Common myeloid progenitor, CD34-positive (primary cell): ENCODE measurements at regions of chr3 and their contacts with region 1.

Region 1: GRCh38 chr3:135503760-135504686 is 461.5 kb upstream of the PPP2R3A start:
- DNase-seq: peak; percentile 60 to 82 (median 77)
- H3K4me3 ChIP-seq: no peak overlapping the region
- H3K27ac ChIP-seq: no peak overlapping the region
- H3K4me1 ChIP-seq: peaks cover 0 to 10% (median 4%) of the 10 kb centered on the region in 4 experiments
- H3K27me3 ChIP-seq: no peaks in the 10 kb centered on the region

Region 2: DNA sequence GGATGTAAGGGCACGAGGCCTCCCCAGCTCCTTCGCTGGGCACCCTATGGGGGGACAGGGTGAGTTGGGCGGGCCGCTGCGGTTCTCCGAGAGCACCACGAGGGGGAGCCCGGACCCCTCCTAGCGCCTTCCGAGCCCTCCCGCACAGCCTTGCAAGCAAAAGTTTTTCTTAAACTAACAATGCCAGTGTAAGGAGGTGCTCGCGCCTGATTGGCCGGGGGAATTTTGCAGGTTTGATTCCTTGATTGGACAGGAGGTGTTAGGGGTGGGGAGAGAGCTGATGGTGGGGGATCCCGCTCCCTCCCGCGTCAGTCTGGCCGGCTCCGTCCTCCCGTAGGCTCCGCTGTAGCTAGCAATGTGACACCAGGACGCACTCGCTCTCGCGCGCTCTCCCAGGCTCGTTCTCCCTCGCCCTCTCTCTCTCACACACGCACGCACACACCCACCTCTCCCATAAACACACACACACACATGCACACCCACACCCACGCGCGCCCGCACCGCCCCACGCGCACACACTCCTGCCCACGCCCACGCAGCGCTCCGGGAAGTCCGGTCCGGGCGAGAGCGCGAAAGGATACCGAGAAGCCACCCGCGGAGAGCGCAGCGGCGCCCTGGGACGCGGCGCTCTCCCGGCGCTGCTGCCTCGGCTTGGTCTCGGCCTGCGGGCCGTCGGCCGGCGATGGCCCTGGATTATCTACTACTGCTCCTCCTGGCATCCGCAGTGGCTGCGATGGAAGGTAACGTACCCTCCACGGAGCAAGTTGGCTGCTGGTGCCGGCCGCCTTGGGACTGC is 708.9 kb before region 1 on chr3 and contains the start of gene EPHB1:
- CTCF ChIA-PET with region 1: interaction called, 75 read pairs
- POLR2A ChIA-PET with region 1: interaction called, 3 read pairs
- DNase-seq: peak; percentile 86 to 93 (median 93)
- H3K4me3 ChIP-seq: peak within 1 kb of the TSS; percentile 25 to 81 (median 66)
- H3K27ac ChIP-seq: no peak within 1 kb of the TSS
- H3K4me1 ChIP-seq: peaks cover 0 to 28% (median 21%) of the 10 kb centered on the region in 4 experiments
- H3K27me3 ChIP-seq: peaks cover 2 to 49% (median 18%) of the 10 kb centered on the region in 5 experiments

Region 3: GRCh38 chr3:134898181-134898754 is 605.8 kb before region 1 on chr3:
- CTCF ChIA-PET with region 1: no interaction called
- POLR2A ChIA-PET with region 1: no interaction called
- DNase-seq: no peak
- H3K4me3 ChIP-seq: no peak overlapping the region
- H3K27ac ChIP-seq: no peak overlapping the region
- H3K4me1 ChIP-seq: no peaks in the 10 kb centered on the region
- H3K27me3 ChIP-seq: peaks cover 0 to 4% (median 0%) of the 10 kb centered on the region in 5 experiments

Region 4: DNA sequence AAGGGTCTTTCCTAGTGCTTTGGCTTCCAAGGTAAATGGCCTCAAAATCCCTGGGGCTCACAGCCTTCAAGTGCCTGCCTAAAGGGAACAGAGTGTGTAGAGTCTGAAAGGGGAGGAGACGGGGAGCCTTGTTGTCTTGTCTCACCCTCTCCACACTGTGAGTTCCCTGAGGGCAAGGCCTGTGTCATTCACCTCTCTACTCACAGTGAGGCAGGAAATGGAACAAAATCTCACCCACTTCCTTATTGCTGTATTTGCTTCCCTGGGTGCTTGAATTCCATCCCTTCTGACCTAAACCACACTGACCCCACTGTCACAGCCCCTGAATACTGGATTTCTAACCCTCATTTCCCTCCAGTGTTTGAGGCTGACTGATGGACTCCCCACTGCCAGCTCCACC is 511.4 kb before region 1 on chr3:
- CTCF ChIA-PET with region 1: no interaction called
- POLR2A ChIA-PET with region 1: no interaction called
- DNase-seq: no peak
- H3K4me3 ChIP-seq: no peak overlapping the region
- H3K27ac ChIP-seq: no peak overlapping the region
- H3K4me1 ChIP-seq: no peaks in the 10 kb centered on the region
- H3K27me3 ChIP-seq: no peaks in the 10 kb centered on the region

Region 5: DNA sequence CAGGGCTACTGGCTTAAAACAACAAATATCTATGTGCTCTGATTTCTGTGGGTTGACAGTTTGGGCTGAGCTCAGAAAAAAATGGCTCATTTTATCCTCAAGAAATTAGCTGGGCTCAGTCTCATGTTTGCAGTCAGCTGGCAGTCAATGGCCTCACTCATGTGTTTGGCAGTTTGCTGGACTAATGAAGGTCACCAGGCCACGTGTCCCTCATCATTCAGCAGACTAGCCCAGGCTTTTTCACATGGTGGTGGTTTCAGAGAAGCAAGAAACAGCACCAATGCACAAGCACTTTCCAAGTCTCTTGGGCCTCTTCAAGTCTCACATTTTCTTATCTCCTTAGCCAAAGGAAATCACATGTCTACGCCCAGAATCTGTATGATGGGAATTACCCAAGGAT is 16.8 kb before region 1 on chr3:
- CTCF ChIA-PET with region 1: no interaction called
- POLR2A ChIA-PET with region 1: interaction called, 11 read pairs
- DNase-seq: no peak
- H3K4me3 ChIP-seq: no peak overlapping the region
- H3K27ac ChIP-seq: no peak overlapping the region
- H3K4me1 ChIP-seq: no peaks in the 10 kb centered on the region
- H3K27me3 ChIP-seq: no peaks in the 10 kb centered on the region